ENCODE measurements at regions of chrX and their contacts with region 1.

Region 1: GRCh38 chrX:84046403-84046984 is 141.5 kb downstream of the RPS6KA6 start:
- DNase-seq: peak in 5 of 9 donors; percentile 1 to 24 (median 21)
- ATAC-seq: no peak
- H3K4me3 ChIP-seq: no peak overlapping the region
- H3K4me3 Mint-ChIP-seq: no peak overlapping the region
- H3K27ac ChIP-seq: no peak overlapping the region
- H3K27ac Mint-ChIP-seq: no peak overlapping the region
- H3K4me1 ChIP-seq: no peaks in the 10 kb centered on the region
- H3K4me1 Mint-ChIP-seq: peaks cover 0 to 4% (median 0%) of the 10 kb centered on the region in 7 donors
- H3K27me3 ChIP-seq: no peaks in the 10 kb centered on the region
- H3K27me3 Mint-ChIP-seq: no peaks in the 10 kb centered on the region

Region 2: DNA sequence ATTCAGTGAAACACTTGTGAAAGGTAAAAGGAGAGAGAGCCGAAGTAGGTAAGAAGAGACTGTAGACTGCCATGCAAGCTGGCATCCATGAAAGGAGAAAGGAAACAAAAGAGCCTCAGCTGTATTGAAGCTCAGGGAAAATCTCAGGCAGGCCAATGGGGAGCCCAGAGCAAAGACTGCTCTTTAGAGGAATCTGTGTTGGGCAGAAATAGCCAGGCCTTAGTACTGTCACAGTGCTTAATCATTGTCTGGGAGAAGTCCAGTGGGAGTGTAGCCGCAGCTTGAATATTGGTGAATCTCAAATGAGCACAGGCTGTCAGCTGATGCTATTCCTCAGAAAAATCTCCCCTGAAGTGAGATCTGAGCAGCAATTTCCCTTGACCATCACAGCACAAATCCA is 157.9 kb before region 1 on chrX:
- CTCF ChIA-PET with region 1: no interaction called
- POLR2A ChIA-PET with region 1: no interaction called
- intact Hi-C with region 1: no loop called
- DNase-seq: no peak
- ATAC-seq: no peak
- H3K4me3 ChIP-seq: no peak overlapping the region
- H3K4me3 Mint-ChIP-seq: no peak overlapping the region
- H3K27ac ChIP-seq: no peak overlapping the region
- H3K27ac Mint-ChIP-seq: no peak overlapping the region
- H3K4me1 ChIP-seq: no peaks in the 10 kb centered on the region
- H3K4me1 Mint-ChIP-seq: no peaks in the 10 kb centered on the region
- H3K27me3 ChIP-seq: no peaks in the 10 kb centered on the region
- H3K27me3 Mint-ChIP-seq: no peaks in the 10 kb centered on the region

Region 3: DNA sequence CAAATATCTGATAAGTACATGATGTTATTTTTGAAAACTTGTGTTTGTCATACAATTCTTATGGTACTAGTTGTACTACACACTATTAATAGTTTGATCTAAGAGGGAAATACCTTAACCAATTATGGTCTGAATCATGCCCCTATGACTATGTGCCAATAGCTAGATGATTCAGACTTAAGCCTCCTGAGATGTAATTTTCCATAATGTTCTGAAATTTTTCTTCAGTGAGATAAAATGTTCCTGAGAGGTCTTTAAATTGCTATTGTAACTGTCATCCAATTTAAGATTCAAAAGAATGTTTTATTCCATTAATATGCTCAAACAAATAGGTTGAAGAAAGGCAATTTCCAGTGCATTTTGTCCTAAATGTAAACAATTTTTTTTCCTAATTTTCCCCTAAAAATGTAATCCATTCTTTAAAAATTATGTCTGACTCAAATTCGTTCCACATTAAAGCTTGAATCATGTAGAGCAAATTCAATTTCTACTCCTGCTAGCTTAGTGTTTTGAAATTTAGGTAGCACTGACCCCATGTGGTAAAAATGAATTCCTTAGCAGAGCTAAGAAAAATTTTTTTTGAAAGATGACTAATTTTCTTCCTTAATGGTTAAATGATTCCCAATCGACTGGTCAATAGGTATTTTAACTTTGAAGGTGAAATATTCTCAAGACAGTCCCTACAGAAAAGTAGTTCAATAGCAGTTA is 1006.3 kb after region 1 on chrX:
- CTCF ChIA-PET with region 1: no interaction called
- POLR2A ChIA-PET with region 1: no interaction called
- intact Hi-C with region 1: loop called in 1 of 2 experiments (anchors 10 kb)
- DNase-seq: no peak
- ATAC-seq: no peak
- H3K4me3 ChIP-seq: no peak overlapping the region
- H3K4me3 Mint-ChIP-seq: no peak overlapping the region
- H3K27ac ChIP-seq: no peak overlapping the region
- H3K27ac Mint-ChIP-seq: no peak overlapping the region
- H3K4me1 ChIP-seq: no peaks in the 10 kb centered on the region
- H3K4me1 Mint-ChIP-seq: no peaks in the 10 kb centered on the region
- H3K27me3 ChIP-seq: no peaks in the 10 kb centered on the region
- H3K27me3 Mint-ChIP-seq: no peaks in the 10 kb centered on the region

Region 4: DNA sequence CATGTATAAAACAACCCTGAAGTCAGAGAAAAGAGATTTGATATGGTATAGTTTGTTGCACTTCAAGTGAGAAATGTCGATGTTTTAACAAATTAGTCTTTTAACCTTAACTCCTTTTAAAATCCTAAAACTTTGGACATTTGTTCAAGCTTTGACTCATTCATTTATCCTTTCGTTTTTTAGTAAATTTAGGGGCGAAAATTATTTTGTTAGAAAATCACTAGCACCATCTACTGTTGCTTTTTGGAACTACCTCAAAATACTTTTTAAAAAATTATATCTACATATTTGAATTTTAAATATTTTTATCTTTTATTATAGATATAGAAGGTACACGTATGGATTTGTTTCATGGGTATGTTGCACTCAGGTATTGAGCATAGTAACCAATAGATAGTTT is 1498.1 kb after region 1 on chrX:
- CTCF ChIA-PET with region 1: no interaction called
- POLR2A ChIA-PET with region 1: no interaction called
- intact Hi-C with region 1: loop called (anchors 10 kb)
- DNase-seq: no peak
- ATAC-seq: no peak
- H3K4me3 ChIP-seq: no peak overlapping the region
- H3K4me3 Mint-ChIP-seq: no peak overlapping the region
- H3K27ac ChIP-seq: no peak overlapping the region
- H3K27ac Mint-ChIP-seq: no peak overlapping the region
- H3K4me1 ChIP-seq: no peaks in the 10 kb centered on the region
- H3K4me1 Mint-ChIP-seq: no peaks in the 10 kb centered on the region
- H3K27me3 ChIP-seq: no peaks in the 10 kb centered on the region
- H3K27me3 Mint-ChIP-seq: no peaks in the 10 kb centered on the region